ENCODE measurements at regions of chr10 and their contacts with region 1.

Region 1: DNA sequence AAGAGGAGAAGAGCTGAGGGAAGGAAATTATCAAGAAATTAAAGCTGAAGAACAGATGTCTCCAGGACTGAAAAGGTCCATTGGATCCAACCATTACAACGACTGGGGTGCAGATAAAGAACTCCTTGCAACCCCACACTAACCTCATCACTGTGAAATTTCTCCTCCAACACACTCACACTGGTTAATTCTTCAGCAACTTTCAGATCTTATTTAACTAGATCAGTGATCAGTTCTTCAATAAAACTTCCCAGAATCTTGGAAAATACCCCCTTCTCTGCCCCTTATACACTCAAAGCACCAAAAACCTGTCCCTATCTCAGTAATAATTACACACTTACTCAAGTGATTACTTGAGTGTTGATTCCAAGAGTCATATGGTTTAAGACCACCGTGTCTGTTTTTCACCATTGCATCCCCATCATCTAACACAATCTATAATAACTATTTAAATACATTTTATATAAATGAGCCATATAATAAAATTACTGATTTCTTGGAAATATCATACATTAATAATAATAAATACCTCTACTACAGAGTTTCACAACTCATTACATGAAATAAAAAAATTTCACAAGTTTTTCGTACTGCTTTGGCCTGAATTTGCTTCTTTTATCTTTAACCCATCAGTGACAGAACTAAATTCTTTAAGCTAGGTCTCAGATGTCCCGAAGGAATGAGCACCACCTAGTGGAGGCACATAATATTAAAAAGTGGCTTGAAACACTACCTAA is 123.7 kb downstream of the MPP7 start:
- DNase-seq: no peak
- H3K4me3 ChIP-seq: no peak overlapping the region
- H3K27ac ChIP-seq: no peak overlapping the region
- H3K4me1 ChIP-seq: no peaks in the 10 kb centered on the region
- H3K27me3 ChIP-seq: no peaks in the 10 kb centered on the region
- CTCF ChIP-seq: peak; percentile 78

Region 2: GRCh38 chr10:27558612-27559020 is 620.6 kb before region 1 on chr10:
- CTCF ChIA-PET with region 1: no interaction called
- POLR2A ChIA-PET with region 1: no interaction called
- intact Hi-C with region 1: loop called (anchors 2 kb)
- DNase-seq: peak; percentile 19 to 35
- H3K4me3 ChIP-seq: no peak overlapping the region
- H3K27ac ChIP-seq: no peak overlapping the region
- H3K4me1 ChIP-seq: no peaks in the 10 kb centered on the region
- H3K27me3 ChIP-seq: no peaks in the 10 kb centered on the region
- CTCF ChIP-seq: peak; percentile 72

Region 3: GRCh38 chr10:28095791-28096378 is 83.3 kb before region 1 on chr10:
- CTCF ChIA-PET with region 1: no interaction called
- POLR2A ChIA-PET with region 1: no interaction called
- intact Hi-C with region 1: no loop called
- DNase-seq: no peak
- H3K4me3 ChIP-seq: no peak overlapping the region
- H3K27ac ChIP-seq: no peak overlapping the region
- H3K4me1 ChIP-seq: no peaks in the 10 kb centered on the region
- H3K27me3 ChIP-seq: 0 out of 2 replicates have a peak, but pooled peaks cover 4% of the 10 kb centered on the region
- CTCF ChIP-seq: no peak

Region 4: GRCh38 chr10:28449926-28450325 is 270.8 kb after region 1 on chr10:
- CTCF ChIA-PET with region 1: no interaction called
- POLR2A ChIA-PET with region 1: no interaction called
- intact Hi-C with region 1: no loop called
- DNase-seq: no peak
- H3K4me3 ChIP-seq: no peak overlapping the region
- H3K27ac ChIP-seq: no peak overlapping the region
- H3K4me1 ChIP-seq: no peaks in the 10 kb centered on the region
- H3K27me3 ChIP-seq: peaks cover 9% of the 10 kb centered on the region; the same call in 1 of the 2 replicates
- CTCF ChIP-seq: no peak

Measured in PC-9 (cell line).